ENCODE measurements at regions of chr3 and their contacts with region 1.

Region 1: GRCh38 chr3:119087799-119088198 is 53.2 kb upstream of the IGSF11 start:
- DNase-seq: no peak
- H3K4me3 ChIP-seq: no peak overlapping the region
- H3K27ac ChIP-seq: no peak overlapping the region
- H3K27me3 ChIP-seq: no peaks in the 10 kb centered on the region
- CTCF ChIP-seq: no peak

Region 2: GRCh38 chr3:119098619-119099222 is 10.9 kb after region 1 on chr3:
- CTCF ChIA-PET with region 1: interaction called, 16 read pairs
- POLR2A ChIA-PET with region 1: no interaction called
- DNase-seq: peak; percentile 3
- H3K4me3 ChIP-seq: no peak overlapping the region
- H3K27ac ChIP-seq: no peak overlapping the region
- H3K27me3 ChIP-seq: no peaks in the 10 kb centered on the region
- CTCF ChIP-seq: peak; percentile 71

Measured in AG04450 (cell line).